Activated CD4-positive, alpha-beta memory T cell treated with anti-CD3 and anti-CD28 coated beads for 36 hours (primary cell): ENCODE measurements at regions of chr2 and their contacts with region 1.

Region 1: GRCh38 chr2:88669371-88670214 is 21.9 kb upstream of the RPIA start:
- DNase-seq: peak; percentile 30
- H3K4me3 Mint-ChIP-seq: no peak overlapping the region
- H3K27ac Mint-ChIP-seq: no peak overlapping the region
- H3K4me1 Mint-ChIP-seq: no peaks in the 10 kb centered on the region
- H3K27me3 Mint-ChIP-seq: no peaks in the 10 kb centered on the region

Region 2: GRCh38 chr2:88350331-88351248 is 319.0 kb before region 1 on chr2:
- CTCF ChIA-PET with region 1: no interaction called
- POLR2A ChIA-PET with region 1: no interaction called
- intact Hi-C with region 1: loop called (anchors 2 kb)
- DNase-seq: peak; percentile 82
- H3K4me3 Mint-ChIP-seq: peak overlapping the region; percentile 55
- H3K27ac Mint-ChIP-seq: no peak overlapping the region
- H3K4me1 Mint-ChIP-seq: peaks cover 2% of the 10 kb centered on the region
- H3K27me3 Mint-ChIP-seq: peaks cover 15% of the 10 kb centered on the region

Region 3: GRCh38 chr2:88600038-88600465 is 69.5 kb before region 1 on chr2:
- CTCF ChIA-PET with region 1: interaction called, 17 read pairs
- POLR2A ChIA-PET with region 1: no interaction called
- intact Hi-C with region 1: no loop called
- DNase-seq: peak; percentile 60
- H3K4me3 Mint-ChIP-seq: no peak overlapping the region
- H3K27ac Mint-ChIP-seq: peak overlapping the region; percentile 29
- H3K4me1 Mint-ChIP-seq: peaks cover 34% of the 10 kb centered on the region
- H3K27me3 Mint-ChIP-seq: no peaks in the 10 kb centered on the region

Region 4: DNA sequence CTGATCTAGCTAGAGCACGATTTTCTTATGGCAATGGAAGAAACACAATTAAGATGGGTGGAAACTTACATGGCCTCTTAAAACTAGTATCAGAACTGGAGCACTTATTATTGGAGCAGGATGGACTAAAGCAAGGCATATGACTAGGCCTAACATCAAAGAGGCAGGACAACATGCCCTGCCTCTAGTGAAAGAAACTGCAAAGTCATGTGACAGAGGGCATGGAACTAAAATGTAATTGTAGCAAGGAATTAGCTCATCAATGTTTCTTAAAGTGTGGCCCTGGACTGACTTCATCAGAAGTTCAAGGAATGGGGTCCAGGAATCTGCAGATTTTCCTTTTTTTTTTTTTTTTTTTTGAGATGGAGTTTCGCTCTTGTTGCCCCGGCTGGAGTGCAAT is 37.0 kb before region 1 on chr2:
- CTCF ChIA-PET with region 1: interaction called, 11 read pairs
- POLR2A ChIA-PET with region 1: no interaction called
- intact Hi-C with region 1: loop called (anchors 5 kb)
- DNase-seq: no peak
- H3K4me3 Mint-ChIP-seq: no peak overlapping the region
- H3K27ac Mint-ChIP-seq: no peak overlapping the region
- H3K4me1 Mint-ChIP-seq: peaks cover 14% of the 10 kb centered on the region
- H3K27me3 Mint-ChIP-seq: no peaks in the 10 kb centered on the region